ENCODE measurements at regions of chr3 and their contacts with region 1.

Region 1: GRCh38 chr3:194682694-194683310 is 2.9 kb upstream of the FAM43A start:
- DNase-seq: peak in 34 of 35 experiments; percentile 26 to 83 (median 54)
- ATAC-seq: peak; percentile 49 to 76 (median 56)
- H3K4me3 ChIP-seq: no peak overlapping the region
- H3K4me3 Mint-ChIP-seq: no peak overlapping the region
- H3K27ac ChIP-seq: no peak overlapping the region
- H3K27ac Mint-ChIP-seq: no peak overlapping the region
- H3K4me1 ChIP-seq: peaks cover 12 to 35% of the 10 kb centered on the region in 2 experiments
- H3K4me1 Mint-ChIP-seq: peaks cover 34 to 41% (median 34%) of the 10 kb centered on the region in 3 donors
- H3K27me3 ChIP-seq: peaks cover 0 to 21% of the 10 kb centered on the region in 2 experiments
- H3K27me3 Mint-ChIP-seq: peaks cover 9 to 10% of the 10 kb centered on the region in 2 donors

Region 2: DNA sequence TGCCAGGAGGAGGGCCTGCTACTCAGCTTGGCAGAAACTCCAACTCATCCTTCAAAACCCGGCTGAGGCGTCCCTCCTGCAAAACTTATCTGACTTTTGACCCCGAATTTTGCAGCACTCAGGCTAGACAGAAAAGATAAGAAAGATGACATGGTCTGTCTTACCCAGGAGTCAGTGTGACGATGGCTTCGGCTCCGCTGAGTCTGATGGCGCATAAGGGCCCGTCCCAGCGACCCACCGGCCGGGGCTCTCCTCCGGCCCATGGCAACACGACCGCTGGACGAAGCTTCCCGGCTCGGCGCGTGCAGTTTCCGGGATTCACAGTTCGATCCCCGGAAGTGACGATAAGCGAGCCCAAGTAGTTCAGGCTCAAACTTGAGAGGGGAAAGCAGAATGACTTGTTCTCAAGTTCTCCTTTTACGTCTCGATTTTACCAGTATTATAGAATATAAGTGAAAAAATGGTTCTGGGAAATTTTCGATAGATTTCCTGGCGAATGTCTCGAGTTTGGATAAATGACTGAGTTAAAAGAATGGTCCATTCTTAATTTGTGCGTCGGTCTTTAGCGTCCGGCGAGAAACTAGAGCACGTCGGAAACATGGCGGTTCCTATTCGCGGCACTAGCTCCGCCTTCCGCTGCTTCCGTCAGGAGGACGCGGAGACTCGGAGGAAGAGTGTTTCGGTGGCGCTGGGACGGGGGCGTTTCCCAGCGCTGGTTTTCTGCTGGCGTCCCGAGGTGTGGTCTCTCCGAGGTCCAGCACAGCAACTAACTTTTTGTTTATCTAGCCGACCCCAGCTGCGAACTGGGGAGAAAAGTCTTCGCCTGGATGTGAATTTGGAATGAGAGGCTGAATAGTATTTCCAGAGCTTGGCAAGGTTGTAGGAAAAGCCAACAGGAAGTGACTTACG is 10.6 kb before region 1 on chr3 and contains the start of gene LSG1:
- CTCF ChIA-PET with region 1: interaction called, 10 to 46 read pairs
- POLR2A ChIA-PET with region 1: interaction called, 3 to 7 read pairs
- DNase-seq: peak; percentile 77 to 97 (median 87)
- ATAC-seq: peak; percentile 95 to 96 (median 96)
- H3K4me3 ChIP-seq: peak within 1 kb of the TSS; percentile 68 to 95
- H3K4me3 Mint-ChIP-seq: peak within 1 kb of the TSS; percentile 98 to 99 (median 99)
- H3K27ac ChIP-seq: peak within 1 kb of the TSS; percentile 90
- H3K27ac Mint-ChIP-seq: peak within 1 kb of the TSS; percentile 98 to 99
- H3K4me1 ChIP-seq: peaks cover 10 to 14% of the 10 kb centered on the region in 2 experiments
- H3K4me1 Mint-ChIP-seq: peaks cover 39 to 45% (median 42%) of the 10 kb centered on the region in 3 donors
- H3K27me3 ChIP-seq: no peaks in the 10 kb centered on the region
- H3K27me3 Mint-ChIP-seq: peaks cover 0 to 5% of the 10 kb centered on the region in 2 donors
- total RNA-seq, gene LSG1: 40.0 to 83.5 (median 49.5) TPM

Region 3: DNA sequence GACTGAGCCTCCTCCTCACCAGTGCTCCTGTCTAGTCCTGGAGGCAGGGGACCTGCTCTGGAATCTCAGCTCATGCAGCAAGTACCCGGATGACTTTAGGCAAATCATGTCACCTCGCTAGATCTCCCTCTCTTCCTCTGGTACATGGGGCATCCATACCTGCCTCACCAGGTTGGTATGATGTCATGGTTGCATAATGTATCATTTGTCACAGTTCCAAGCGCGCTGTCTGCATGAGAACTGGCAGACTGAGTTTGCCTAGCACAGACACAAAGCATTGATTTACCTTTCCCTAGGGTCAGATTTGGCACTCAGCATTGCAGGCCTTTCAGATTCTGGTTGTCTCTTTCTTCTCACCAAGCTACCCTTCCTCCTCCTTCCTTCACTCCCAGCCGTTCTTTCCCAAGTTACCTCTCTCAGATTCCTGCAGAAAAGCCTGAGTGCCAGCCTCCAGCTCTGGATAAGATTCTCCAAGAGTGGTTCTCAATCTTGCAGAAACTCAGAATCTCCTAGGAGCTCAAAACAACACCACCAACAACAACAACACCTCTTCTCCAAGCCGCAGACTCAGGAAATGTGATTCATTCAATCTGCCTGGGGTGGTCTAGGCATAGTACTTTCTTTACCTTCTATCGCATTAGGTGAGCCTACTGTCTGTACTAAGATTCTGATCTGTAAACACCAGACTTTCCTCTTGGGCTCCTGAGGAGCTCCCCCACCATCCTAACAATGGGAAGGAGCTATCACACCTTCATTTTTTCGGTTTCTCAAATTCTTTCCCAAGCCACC is 32.4 kb after region 1 on chr3:
- CTCF ChIA-PET with region 1: interaction called in 1 of 2 experiments, 4 read pairs
- POLR2A ChIA-PET with region 1: interaction called in 1 of 2 experiments, 19 read pairs
- DNase-seq: peak in 14 of 35 experiments; percentile 4 to 42 (median 8)
- ATAC-seq: peak; percentile 32 to 86 (median 49)
- H3K4me3 ChIP-seq: no peak overlapping the region
- H3K4me3 Mint-ChIP-seq: peak overlapping the region in 2 of 3 donors; percentile 39 to 61
- H3K27ac ChIP-seq: peak overlapping the region; percentile 57
- H3K27ac Mint-ChIP-seq: peak overlapping the region; percentile 88 to 93
- H3K4me1 ChIP-seq: no peaks in the 10 kb centered on the region
- H3K4me1 Mint-ChIP-seq: peaks cover 0 to 12% (median 8%) of the 10 kb centered on the region in 3 donors
- H3K27me3 ChIP-seq: no peaks in the 10 kb centered on the region
- H3K27me3 Mint-ChIP-seq: no peaks in the 10 kb centered on the region

Region 4: DNA sequence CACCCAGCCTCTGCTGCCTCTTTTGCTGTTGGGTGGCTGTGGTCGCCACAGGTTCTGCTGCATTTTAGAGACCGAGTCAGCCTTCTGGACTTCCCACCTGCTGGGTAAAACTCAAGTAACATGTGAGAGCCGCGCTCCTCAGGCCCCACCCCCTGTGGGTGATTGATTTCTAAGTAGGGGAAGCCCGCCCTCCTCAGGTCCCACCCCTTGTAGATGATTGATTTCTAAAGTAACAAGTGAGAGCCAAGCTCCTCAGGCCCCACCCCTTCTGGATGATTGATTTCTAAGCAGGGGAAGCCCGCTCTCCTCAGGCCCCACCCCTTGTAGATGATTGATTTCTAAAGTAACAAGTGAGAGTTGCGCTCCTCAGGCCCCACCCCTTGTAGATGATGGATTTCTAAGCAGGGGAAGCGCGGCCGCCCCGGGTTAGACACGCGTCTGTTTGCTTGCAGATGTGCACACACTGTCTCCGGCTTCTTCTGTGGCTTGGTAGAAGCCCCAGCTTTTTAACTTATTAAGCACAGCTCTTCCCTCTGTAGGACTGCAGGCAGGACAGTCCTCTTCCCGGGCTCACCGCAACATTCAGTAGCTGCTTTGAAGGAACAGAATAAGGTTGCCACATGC is 86.3 kb after region 1 on chr3:
- CTCF ChIA-PET with region 1: interaction called in 1 of 2 experiments, 17 read pairs
- POLR2A ChIA-PET with region 1: interaction called in 1 of 2 experiments, 11 read pairs
- DNase-seq: peak; percentile 79 to 97 (median 92)
- ATAC-seq: peak; percentile 96 to 98 (median 98)
- H3K4me3 ChIP-seq: peak overlapping the region; percentile 38 to 54
- H3K4me3 Mint-ChIP-seq: peak overlapping the region; percentile 81 to 84 (median 83)
- H3K27ac ChIP-seq: peak overlapping the region; percentile 79
- H3K27ac Mint-ChIP-seq: peak overlapping the region; percentile 93 to 94
- H3K4me1 ChIP-seq: peaks cover 4 to 10% of the 10 kb centered on the region in 2 experiments
- H3K4me1 Mint-ChIP-seq: peaks cover 21 to 30% (median 25%) of the 10 kb centered on the region in 3 donors
- H3K27me3 ChIP-seq: peaks cover 0 to 19% of the 10 kb centered on the region in 2 experiments
- H3K27me3 Mint-ChIP-seq: peaks cover 8 to 11% of the 10 kb centered on the region in 2 donors

Region 5: DNA sequence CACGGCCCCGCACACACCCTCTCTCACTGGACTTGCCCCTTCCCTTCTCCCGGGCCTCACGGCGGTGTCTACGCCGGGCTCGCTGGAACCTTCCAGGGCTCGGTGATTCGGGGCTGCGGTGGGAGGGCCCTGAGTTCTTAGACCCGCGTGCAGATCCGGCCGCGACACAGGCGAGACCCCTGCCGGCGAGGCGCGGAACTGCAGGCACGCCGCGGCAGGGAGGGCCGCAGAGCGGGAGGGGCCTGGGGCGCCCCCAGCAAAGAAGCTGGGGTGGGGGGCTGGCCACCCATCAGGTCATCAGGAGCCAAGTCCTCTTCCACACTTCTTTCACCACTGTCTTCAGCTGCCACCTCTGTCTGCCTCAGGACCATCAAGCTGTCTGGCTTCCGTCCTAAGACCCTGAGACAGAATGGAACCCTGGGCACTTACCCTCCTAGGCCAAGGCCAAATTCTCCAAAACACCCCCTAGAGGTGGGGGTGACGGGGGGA is 423.7 kb after region 1 on chr3:
- CTCF ChIA-PET with region 1: interaction called, 10 to 16 read pairs
- POLR2A ChIA-PET with region 1: no interaction called
- DNase-seq: peak; percentile 29 to 81 (median 61)
- ATAC-seq: peak; percentile 85 to 94 (median 91)
- H3K4me3 ChIP-seq: peak overlapping the region; percentile 12 to 21
- H3K4me3 Mint-ChIP-seq: peak overlapping the region in 2 of 3 donors; percentile 18 to 41
- H3K27ac ChIP-seq: no peak overlapping the region
- H3K27ac Mint-ChIP-seq: no peak overlapping the region
- H3K4me1 ChIP-seq: peaks cover 0 to 8% of the 10 kb centered on the region in 2 experiments
- H3K4me1 Mint-ChIP-seq: peaks cover 5 to 6% (median 5%) of the 10 kb centered on the region in 3 donors
- H3K27me3 ChIP-seq: no peaks in the 10 kb centered on the region
- H3K27me3 Mint-ChIP-seq: no peaks in the 10 kb centered on the region